ENCODE measurements at regions of chr11 and their contacts with region 1.

Region 1: DNA sequence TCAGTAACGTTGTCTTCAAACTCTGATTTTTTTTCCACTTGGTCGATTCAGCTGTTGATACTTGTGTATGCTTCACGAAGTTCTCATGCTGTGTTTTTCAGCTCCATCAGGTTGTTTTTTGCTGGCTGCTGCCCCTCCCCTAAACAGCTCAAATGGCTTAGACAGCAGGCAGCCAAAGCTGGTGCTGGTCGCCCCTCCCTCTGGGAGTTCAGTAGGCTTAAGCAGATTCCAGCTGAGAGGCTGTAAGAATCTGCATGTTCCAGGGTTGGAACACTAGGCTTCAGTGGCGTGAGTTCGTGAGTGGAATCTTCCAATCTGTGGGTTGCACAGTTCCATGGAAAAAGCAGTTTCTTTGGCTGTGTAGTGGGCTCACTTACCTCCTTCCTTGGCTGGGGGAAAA is 10.3 kb upstream of the FIBIN start:
- DNase-seq: no peak
- H3K4me3 ChIP-seq: no peak overlapping the region
- H3K27ac ChIP-seq: no peak overlapping the region
- H3K4me1 ChIP-seq: no peaks in the 10 kb centered on the region
- CTCF ChIP-seq: no peak

Region 2: DNA sequence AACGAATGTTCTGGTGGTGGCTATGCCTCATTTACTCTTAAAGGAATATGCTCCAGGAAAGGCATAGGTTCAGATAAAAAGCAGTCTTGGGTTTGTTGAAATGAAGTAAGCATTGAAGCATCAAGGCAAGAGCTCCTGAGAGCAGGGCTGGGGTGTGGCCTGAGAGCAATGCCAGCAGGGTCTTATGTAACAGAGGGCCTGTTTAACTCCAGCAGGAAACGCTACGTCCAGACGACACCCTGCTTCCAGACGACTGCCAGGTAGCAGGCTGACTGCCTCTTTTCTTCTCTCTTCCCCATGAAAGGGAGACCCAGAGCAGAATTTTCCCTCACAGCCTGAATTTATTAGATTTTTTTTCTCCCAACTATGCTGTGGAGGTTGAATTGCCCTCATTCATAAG is 134.6 kb before region 1 on chr11:
- CTCF ChIA-PET with region 1: no interaction called
- POLR2A ChIA-PET with region 1: no interaction called
- intact Hi-C with region 1: no loop called
- DNase-seq: no peak
- H3K4me3 ChIP-seq: no peak overlapping the region
- H3K27ac ChIP-seq: no peak overlapping the region
- H3K4me1 ChIP-seq: no peaks in the 10 kb centered on the region
- CTCF ChIP-seq: no peak

Region 3: GRCh38 chr11:27004103-27004502 is 20.5 kb after region 1 on chr11:
- CTCF ChIA-PET with region 1: no interaction called
- POLR2A ChIA-PET with region 1: interaction called, 3 read pairs
- intact Hi-C with region 1: loop called (anchors 2 kb)
- DNase-seq: no peak
- H3K4me3 ChIP-seq: no peak overlapping the region
- H3K27ac ChIP-seq: no peak overlapping the region
- H3K4me1 ChIP-seq: no peaks in the 10 kb centered on the region
- CTCF ChIP-seq: no peak

Measured in OCI-LY7 (cell line).